ENCODE measurements at regions of chr6 and their contacts with region 1.

Region 1: DNA sequence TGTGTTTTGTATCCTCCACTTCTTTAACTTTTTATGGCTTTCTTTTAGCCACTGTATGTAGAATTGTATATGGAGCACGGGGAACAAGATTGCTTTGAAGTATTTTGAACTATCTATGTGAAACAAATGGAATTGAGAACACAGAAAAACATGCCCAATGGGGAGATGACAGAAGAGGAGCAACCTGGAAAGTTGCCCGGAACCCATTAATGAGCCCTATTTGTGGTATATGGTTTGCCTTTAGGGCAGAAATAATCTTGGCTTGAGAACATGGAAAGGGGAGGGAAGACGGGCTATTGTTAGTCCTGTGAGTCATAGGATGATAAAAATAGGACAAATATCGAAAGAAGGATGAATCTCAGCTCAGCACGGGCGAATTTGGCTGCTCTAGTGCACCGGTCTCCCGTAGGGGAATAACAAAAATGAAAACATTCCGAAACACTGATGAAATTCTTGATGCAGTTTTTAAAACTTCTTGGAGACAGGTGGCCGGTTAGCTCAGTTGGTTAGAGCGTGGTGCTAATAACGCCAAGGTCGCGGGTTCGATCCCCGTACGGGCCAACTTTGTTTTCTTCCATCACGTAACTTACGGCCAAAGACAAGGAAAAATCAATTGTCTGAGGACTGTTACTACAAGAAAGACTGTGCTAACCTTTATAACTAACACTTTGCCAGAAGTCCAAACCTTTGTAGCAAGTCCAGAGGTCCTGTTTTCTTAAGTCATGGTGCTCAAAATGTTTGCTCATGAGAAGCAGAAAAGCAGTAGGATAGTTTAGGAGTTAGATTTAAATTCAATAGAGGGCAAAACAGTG is 15.7 kb downstream of the HMGN4 start:
- DNase-seq: no peak
- H3K4me3 ChIP-seq: peak overlapping the region; percentile 49 to 51
- H3K27ac ChIP-seq: peak overlapping the region; percentile 91
- H3K4me1 ChIP-seq: peaks cover 7% of the 10 kb centered on the region
- H3K27me3 ChIP-seq: no peaks in the 10 kb centered on the region
- CTCF ChIP-seq: no peak
- POLR2A ChIP-seq: no peak

Region 2: GRCh38 chr6:26312501-26313390 is 241.1 kb before region 1 on chr6:
- intact Hi-C with region 1: loop called (anchors 5 kb)
- DNase-seq: no peak
- H3K4me3 ChIP-seq: peak overlapping the region; percentile 41 to 42
- H3K27ac ChIP-seq: peak overlapping the region; percentile 52
- H3K4me1 ChIP-seq: peaks cover 24% of the 10 kb centered on the region
- H3K27me3 ChIP-seq: no peaks in the 10 kb centered on the region
- CTCF ChIP-seq: no peak
- POLR2A ChIP-seq: no peak

Region 3: DNA sequence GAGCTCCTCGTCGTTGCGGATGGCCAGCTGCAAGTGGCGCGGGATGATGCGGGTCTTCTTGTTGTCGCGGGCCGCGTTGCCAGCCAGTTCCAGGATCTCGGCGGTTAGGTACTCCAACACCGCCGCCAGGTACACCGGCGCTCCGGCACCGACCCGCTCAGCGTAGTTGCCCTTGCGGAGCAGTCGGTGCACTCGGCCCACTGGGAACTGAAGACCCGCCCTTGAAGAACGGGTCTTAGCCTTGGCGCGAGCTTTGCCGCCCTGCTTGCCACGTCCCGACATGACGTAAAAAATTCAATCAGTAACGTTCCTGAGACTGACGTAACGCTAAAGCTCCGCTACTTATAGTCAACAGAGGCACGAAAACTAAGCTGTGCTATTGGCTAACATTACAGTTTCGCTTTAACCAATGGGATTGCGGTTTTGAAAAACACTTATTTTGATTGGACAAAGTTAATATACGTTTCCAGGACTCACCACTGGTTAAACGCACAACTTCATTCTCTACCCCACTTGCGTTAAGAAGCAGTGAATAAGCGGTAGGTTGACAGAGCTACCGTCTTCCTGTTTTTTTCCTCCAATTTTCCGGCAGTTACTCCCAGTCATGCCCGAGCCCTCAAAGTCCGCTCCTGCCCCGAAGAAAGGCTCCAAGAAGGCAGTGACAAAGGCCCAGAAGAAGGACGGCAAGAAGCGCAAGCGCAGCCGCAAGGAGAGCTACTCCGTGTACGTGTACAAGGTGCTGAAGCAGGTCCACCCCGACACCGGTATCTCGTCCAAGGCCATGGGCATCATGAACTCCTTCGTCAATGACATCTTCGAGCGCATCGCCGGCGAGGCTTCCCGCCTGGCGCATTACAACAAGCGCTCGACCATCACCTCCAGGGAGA is 1284.5 kb after region 1 on chr6:
- intact Hi-C with region 1: loop called (anchors 10 kb)
- DNase-seq: peak in 1 of 2 donors; percentile 97
- H3K4me3 ChIP-seq: peak overlapping the region; percentile 69 to 84
- H3K27ac ChIP-seq: peak overlapping the region; percentile 93
- H3K4me1 ChIP-seq: peaks cover 32% of the 10 kb centered on the region
- H3K27me3 ChIP-seq: no peaks in the 10 kb centered on the region
- CTCF ChIP-seq: peak in 1 of 3 experiments; percentile 32
- POLR2A ChIP-seq: peak; percentile 52 to 89